ENCODE measurements at regions of chr17 and their contacts with region 1.

Region 1: GRCh38 chr17:39461113-39461925 is at the start of gene CDK12:
- DNase-seq: peak; percentile 100
- ATAC-seq: peak; percentile 91
- H3K4me3 ChIP-seq: peak within 1 kb of the TSS; percentile 82
- H3K27ac ChIP-seq: peak within 1 kb of the TSS; percentile 94
- H3K4me1 ChIP-seq: no peaks in the 10 kb centered on the region
- H3K27me3 ChIP-seq: no peaks in the 10 kb centered on the region
- CTCF ChIP-seq: no peak
- POLR2A ChIP-seq: peak; percentile 96
- RAD21 ChIP-seq: no peak
- total RNA-seq, gene CDK12: 27.1 and 31.1 TPM in 2 replicates

Region 2: DNA sequence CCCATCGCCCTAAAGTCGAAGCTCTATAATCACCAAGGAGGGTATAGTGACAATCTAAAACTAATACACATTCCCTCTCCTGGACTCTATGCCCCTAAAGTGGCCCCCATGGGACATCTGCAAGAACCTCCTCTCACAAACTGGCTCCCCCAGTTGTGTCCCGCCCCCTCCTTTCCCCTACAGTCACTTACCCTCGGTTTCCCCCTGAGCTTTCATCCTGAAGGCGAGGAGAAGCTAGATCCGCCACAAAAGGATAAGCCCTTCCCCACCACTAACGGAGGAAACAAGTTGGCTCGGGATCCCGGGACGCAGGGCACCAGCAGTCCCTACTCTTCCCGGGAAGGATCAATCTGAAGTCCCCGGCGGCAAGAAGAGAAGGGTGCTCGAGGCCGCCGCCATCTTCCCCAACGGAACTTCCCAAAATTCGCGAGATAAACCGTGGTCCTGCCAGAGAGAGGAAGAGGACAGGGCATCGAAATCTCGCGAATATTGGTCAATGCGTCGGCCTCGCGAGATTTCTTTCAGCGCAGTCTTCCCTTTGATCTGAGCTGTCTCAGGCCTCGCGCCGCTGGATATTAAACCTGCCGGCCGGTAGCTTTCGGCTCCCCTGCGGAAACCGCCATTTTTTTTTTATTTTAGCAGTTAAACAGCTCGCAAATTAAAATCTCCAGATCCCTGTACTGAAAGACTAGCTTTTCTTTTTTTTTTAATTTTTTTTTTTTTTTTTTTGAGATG is 10.3 kb before region 1 on chr17 and contains the start of gene MED1:
- CTCF ChIA-PET with region 1: interaction called, 5 read pairs
- POLR2A ChIA-PET with region 1: interaction called, 19 read pairs
- dilution Hi-C with region 1: no loop called
- in situ Hi-C with region 1: no loop called
- intact Hi-C with region 1: loop called (anchors 1 kb)
- DNase-seq: peak; percentile 98
- ATAC-seq: peak; percentile 98
- H3K4me3 ChIP-seq: peak within 1 kb of the TSS; percentile 91
- H3K27ac ChIP-seq: peak within 1 kb of the TSS; percentile 97
- H3K4me1 ChIP-seq: peaks cover 3% of the 10 kb centered on the region; the same call in 1 of the 2 replicates
- H3K27me3 ChIP-seq: no peaks in the 10 kb centered on the region
- CTCF ChIP-seq: no peak
- POLR2A ChIP-seq: peak; percentile 91
- RAD21 ChIP-seq: no peak
- total RNA-seq, gene MED1: 21.9 and 24.2 TPM in 2 replicates

Region 3: DNA sequence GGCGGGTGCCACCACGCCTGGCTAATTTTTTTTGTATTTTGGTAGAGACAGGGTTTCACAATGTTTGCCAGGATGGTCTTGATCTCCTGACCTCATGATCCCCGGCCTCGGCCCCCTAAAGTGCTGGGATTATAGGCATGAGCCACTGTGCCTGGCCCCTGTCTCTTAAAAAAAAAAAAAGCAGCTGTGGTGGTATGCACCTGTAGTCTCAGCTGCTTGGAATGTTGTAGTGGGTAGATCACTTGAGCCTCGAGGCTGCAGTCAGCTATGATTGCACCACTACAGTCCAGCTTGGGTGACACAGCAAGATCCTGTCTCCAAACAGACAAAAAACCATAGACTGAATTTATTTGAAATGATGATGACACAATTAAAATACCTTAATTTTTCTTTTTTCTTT is 24.2 kb after region 1 on chr17:
- CTCF ChIA-PET with region 1: no interaction called
- POLR2A ChIA-PET with region 1: interaction called, 5 read pairs
- dilution Hi-C with region 1: no loop called
- in situ Hi-C with region 1: no loop called
- intact Hi-C with region 1: loop called (anchors 2 kb)
- DNase-seq: peak; percentile 98
- ATAC-seq: peak; percentile 89
- H3K4me3 ChIP-seq: no peak overlapping the region
- H3K27ac ChIP-seq: peak overlapping the region; percentile 38; the same call in 1 of the 2 replicates
- H3K4me1 ChIP-seq: no peaks in the 10 kb centered on the region; the same call in 1 of the 2 replicates
- H3K27me3 ChIP-seq: no peaks in the 10 kb centered on the region
- CTCF ChIP-seq: no peak
- POLR2A ChIP-seq: no peak
- RAD21 ChIP-seq: no peak

Region 4: GRCh38 chr17:40098846-40099618 is 637.7 kb after region 1 on chr17:
- CTCF ChIA-PET with region 1: no interaction called
- POLR2A ChIA-PET with region 1: no interaction called
- dilution Hi-C with region 1: no loop called
- in situ Hi-C with region 1: no loop called
- intact Hi-C with region 1: no loop called
- DNase-seq: peak; percentile 98
- ATAC-seq: peak; percentile 80
- H3K4me3 ChIP-seq: peak overlapping the region; percentile 65
- H3K27ac ChIP-seq: peak overlapping the region; percentile 91
- H3K4me1 ChIP-seq: peaks cover 22% of the 10 kb centered on the region
- H3K27me3 ChIP-seq: no peaks in the 10 kb centered on the region
- CTCF ChIP-seq: no peak
- POLR2A ChIP-seq: peak; percentile 81
- RAD21 ChIP-seq: no peak